Sigmoid colon (tissue), 7 donors: ENCODE measurements at regions of chr2 and their contacts with region 1.

Region 1: GRCh38 chr2:66434679-66435548 is at the start of gene MEIS1:
- DNase-seq: peak; percentile 99
- H3K4me3 ChIP-seq: peak within 1 kb of the TSS; percentile 62 to 87 (median 84)
- H3K27ac ChIP-seq: peak within 1 kb of the TSS; percentile 93 to 99 (median 98)
- H3K4me1 ChIP-seq: peaks cover 0 to 25% (median 17%) of the 10 kb centered on the region in 4 donors
- H3K27me3 ChIP-seq: no peaks in the 10 kb centered on the region
- CTCF ChIP-seq: no peak
- EP300 ChIP-seq: peak in 2 of 4 donors; percentile 35 to 60
- POLR2A ChIP-seq: peak; percentile 93 to 98
- total RNA-seq, gene MEIS1: 108 to 144 (median 128) TPM

Region 2: GRCh38 chr2:66686755-66687154 is 251.8 kb after region 1 on chr2:
- intact Hi-C with region 1: loop called (anchors 2 kb)
- DNase-seq: no peak
- H3K4me3 ChIP-seq: no peak overlapping the region
- H3K27ac ChIP-seq: peak overlapping the region; percentile 76 to 91 (median 85)
- H3K4me1 ChIP-seq: peaks cover 0 to 55% (median 23%) of the 10 kb centered on the region in 4 donors
- H3K27me3 ChIP-seq: no peaks in the 10 kb centered on the region
- CTCF ChIP-seq: no peak
- EP300 ChIP-seq: no peak
- POLR2A ChIP-seq: no peak

Region 3: GRCh38 chr2:66962625-66963207 is 527.8 kb after region 1 on chr2:
- intact Hi-C with region 1: loop called (anchors 10 kb)
- DNase-seq: peak; percentile 94
- H3K4me3 ChIP-seq: no peak overlapping the region
- H3K27ac ChIP-seq: peak overlapping the region; percentile 44 to 87 (median 82)
- H3K4me1 ChIP-seq: peaks cover 0 to 51% (median 26%) of the 10 kb centered on the region in 4 donors
- H3K27me3 ChIP-seq: no peaks in the 10 kb centered on the region
- CTCF ChIP-seq: no peak
- EP300 ChIP-seq: peak; percentile 58 to 93 (median 78)
- POLR2A ChIP-seq: no peak

Region 4: GRCh38 chr2:67215214-67216055 is 780.5 kb after region 1 on chr2:
- intact Hi-C with region 1: loop called (anchors 2 kb)
- DNase-seq: peak; percentile 89
- H3K4me3 ChIP-seq: peak overlapping the region in 1 of 4 donors; percentile 17
- H3K27ac ChIP-seq: peak overlapping the region; percentile 65 to 83 (median 74)
- H3K4me1 ChIP-seq: peaks cover 0 to 52% (median 27%) of the 10 kb centered on the region in 4 donors
- H3K27me3 ChIP-seq: no peaks in the 10 kb centered on the region
- CTCF ChIP-seq: peak; percentile 27 to 51 (median 45)
- EP300 ChIP-seq: no peak
- POLR2A ChIP-seq: no peak

Region 5: DNA sequence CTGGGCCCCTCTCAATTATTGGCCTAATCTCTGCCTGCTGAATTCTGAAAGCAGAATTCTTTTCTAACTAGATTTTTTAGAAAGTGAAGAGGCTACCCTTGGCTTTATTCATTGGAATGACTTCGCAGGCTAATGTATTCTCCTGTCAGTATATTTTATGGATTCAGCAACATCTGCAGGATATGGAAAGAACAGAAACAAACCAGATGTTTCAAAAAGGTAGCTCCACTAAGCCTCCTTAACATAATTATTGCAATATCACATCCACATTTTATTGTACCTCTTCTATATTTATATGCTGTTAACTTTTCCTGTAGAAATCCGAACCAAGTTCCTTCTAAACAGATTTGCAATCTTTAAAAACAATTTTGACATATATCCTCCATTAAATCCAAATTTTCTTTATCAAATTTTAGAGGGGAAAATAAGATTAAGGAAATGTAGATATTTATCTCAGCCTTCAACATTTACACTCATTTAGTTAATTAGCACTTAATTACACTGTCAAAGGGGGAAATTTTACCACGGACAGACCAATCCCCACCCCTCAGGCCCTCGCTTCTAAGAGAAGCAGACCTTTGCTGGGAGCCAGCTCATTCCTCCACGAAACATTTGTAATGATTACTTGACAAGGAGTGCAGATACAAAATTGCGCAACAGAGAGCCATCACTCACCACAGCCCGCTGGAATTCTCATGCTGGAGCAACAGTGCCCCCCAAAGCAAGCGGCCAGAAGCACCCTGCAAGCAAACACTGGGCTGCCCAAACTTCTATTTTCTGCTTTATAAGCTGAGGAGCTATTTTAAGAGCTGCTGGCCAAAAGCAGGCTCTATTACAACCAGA is 1215.6 kb after region 1 on chr2:
- intact Hi-C with region 1: loop called (anchors 2 kb)
- DNase-seq: peak; percentile 96
- H3K4me3 ChIP-seq: peak overlapping the region in 1 of 4 donors; percentile 1
- H3K27ac ChIP-seq: peak overlapping the region; percentile 72 to 91 (median 83)
- H3K4me1 ChIP-seq: peaks cover 0 to 41% (median 32%) of the 10 kb centered on the region in 4 donors
- H3K27me3 ChIP-seq: no peaks in the 10 kb centered on the region
- CTCF ChIP-seq: peak; percentile 55 to 77 (median 66)
- EP300 ChIP-seq: peak in 3 of 4 donors; percentile 11 to 72 (median 63)
- POLR2A ChIP-seq: no peak